ENCODE measurements at regions of chr1 and their contacts with region 1.

Region 1: GRCh38 chr1:48055876-48056764 is 58.9 kb upstream of the TRABD2B start:
- DNase-seq: no peak
- H3K4me3 ChIP-seq: no peak overlapping the region
- H3K27ac ChIP-seq: no peak overlapping the region
- H3K4me1 ChIP-seq: peaks cover 0 to 4% of the 10 kb centered on the region in 2 donors
- H3K27me3 ChIP-seq: no peaks in the 10 kb centered on the region
- CTCF ChIP-seq: no peak
- POLR2A ChIP-seq: no peak

Region 2: DNA sequence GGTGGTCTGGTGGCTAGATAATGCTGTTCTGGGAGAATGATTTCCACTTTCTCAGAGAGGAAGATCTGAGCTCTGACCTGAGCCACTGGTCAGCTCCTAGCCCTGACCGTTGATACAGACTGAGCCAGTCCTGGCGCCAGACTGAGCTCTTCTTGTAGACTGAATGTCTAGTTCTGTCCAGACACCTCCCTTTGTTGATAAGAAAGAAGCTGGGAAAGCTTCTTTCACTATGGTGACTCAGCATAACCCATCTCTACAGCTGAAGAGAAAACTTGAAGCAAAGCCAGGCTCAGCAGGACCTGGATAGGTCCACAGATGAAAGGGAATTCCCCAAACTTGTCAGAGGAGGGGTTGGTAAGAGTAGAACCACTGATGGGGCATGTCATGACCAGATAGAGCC is 49.1 kb before region 1 on chr1:
- intact Hi-C with region 1: loop called (anchors 10 kb)
- DNase-seq: no peak
- H3K4me3 ChIP-seq: no peak overlapping the region
- H3K27ac ChIP-seq: no peak overlapping the region
- H3K4me1 ChIP-seq: no peaks in the 10 kb centered on the region
- H3K27me3 ChIP-seq: no peaks in the 10 kb centered on the region
- CTCF ChIP-seq: no peak
- POLR2A ChIP-seq: no peak

Measured in breast epithelium (tissue), 4 donors.